Cardiac septum (tissue), 1 donor: ENCODE measurements at regions of chr3 and their contacts with region 1.

Region 1: DNA sequence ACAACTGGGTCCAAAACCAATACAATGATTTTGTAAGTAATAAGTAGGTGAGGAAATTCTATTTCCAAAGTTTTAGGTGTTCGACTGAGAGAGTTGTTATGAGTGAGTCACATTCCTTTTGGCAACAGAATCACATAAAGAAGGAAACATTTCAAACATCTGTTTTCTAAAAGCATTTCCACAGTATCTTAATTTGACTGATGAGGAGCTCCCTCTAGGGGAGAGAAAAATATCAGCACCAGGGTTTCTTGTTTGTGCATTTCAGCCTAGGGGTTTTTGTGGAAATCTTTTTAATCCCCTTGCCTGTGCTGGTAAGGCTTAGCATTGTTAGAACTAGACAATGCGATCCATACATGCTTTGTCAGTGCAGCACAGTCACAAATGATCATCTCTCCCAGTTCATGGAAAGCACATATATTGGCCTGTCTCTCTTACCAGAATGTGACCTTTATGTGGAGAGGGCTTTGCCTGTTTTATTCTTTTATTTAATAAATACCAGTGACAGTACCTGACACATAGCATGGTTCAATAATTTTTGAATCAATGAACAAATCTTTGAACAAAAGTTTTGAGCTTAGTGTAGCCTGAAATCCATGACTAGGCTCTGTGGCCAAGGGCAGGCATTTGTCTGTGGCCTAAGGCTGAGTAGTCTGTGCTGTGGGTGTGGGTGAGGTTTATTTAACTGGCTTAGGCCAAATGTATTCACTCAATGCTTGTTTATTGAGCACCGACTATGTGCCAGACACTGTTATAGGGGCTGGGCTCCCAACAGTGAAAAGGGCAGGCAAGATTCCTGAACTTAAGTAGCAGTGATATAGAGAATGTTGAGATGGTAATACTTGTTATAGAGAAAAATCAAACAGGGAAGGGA is 21.1 kb upstream of the IQCF6 start:
- DNase-seq: no peak

Region 2: GRCh38 chr3:51519848-51520247 is 280.3 kb before region 1 on chr3:
- intact Hi-C with region 1: no loop called
- DNase-seq: no peak

Region 3: DNA sequence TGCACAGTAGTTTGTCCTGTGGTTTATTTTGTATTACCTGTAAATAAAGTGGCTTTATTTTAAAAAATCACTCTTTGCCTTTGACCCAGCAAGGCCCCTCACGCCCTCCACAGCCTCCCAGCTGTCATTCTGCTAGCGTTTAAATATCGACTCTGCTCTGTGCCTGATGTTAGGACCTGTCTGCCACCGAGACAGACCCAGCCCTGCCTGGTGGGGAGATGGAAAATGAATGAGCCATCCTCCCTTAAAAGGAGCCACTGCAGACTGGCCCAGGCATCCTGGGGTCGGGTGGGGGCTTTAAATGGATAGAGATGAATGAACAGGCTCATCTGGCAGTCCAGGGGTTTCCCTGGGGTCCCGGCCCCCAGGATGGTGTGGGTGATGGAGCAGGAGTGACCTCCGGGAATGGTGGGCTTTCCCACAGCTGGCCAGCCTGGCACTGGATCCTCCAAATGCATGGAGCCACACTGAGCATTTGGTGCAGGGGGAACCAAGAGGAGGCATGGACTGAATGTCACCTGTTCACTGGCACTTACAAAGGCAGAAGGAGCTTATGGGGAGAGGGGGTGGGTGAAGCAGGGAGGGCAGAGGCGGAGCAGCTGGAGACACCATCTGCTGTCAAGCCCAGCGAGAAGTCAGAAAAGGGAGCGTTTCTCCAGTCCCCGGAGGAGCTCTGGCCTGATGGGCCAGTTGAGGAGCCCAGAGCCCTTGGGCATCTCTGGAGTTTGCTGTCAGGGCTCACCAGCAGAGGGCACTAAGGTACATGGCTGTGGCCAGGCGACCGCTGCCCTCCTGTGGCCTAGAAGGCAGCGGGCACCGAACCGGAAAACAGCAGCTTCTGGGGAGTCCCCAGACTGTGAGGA is 81.3 kb before region 1 on chr3:
- intact Hi-C with region 1: loop called (anchors 5 kb)
- DNase-seq: no peak